Activated CD8-positive, alpha-beta memory T cell treated with anti-CD3 and anti-CD28 coated beads, Interleukin-2, amount 10 ng/mL, durations not matched to agents 7 days and 5 days (primary cell): ENCODE measurements at regions of chr20 and their contacts with region 1.

Region 1: DNA sequence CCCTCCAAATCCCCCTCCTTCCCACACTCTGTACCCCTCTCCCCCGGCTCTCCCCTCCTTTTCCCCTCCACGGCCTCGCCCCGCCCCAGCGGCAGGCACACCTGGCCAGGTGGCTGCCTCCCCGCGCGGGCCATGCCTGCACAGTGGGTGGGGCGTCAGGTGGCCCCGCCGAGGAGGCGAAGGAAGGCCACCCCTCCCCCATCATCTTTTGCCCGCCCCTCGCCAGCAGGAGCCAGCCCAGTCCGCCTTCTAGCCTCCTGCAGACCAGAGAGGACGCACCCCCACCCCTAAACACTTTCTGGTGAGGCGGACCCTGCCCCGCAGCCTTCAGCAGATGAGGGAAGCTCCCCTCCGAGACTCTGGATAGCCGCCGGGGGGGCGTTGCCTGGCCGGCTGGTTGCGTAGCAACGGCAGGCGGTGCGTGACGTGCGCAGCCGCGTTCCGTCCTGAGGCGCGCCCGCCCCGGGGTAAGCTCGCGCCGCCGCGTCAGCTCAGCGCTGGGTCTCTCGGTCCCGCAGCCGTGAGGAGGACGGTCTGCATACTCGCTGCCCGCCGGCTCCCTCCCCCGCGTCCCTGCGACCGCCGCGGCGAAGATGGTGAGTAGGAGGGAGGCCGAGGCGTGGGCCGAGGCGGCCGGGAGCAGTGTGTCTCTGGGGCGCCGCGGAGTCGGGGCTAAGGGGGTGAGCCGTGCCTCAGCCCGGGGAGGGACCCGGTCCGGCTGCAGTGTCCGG is at the start of gene DSTN:
- DNase-seq: peak; percentile 91
- ATAC-seq: peak; percentile 90
- H3K4me3 Mint-ChIP-seq: peak within 1 kb of the TSS; percentile 88
- H3K27ac Mint-ChIP-seq: peak within 1 kb of the TSS; percentile 89
- H3K4me1 Mint-ChIP-seq: peaks cover 29% of the 10 kb centered on the region
- H3K27me3 Mint-ChIP-seq: peaks cover 21% of the 10 kb centered on the region
- total RNA-seq, gene DSTN: 55.8 to 78.3 TPM

Region 2: GRCh38 chr20:17431621-17432364 is 138.0 kb before region 1 on chr20:
- CTCF ChIA-PET with region 1: no interaction called
- DNase-seq: peak; percentile 53
- ATAC-seq: peak; percentile 58
- H3K4me3 Mint-ChIP-seq: no peak overlapping the region
- H3K27ac Mint-ChIP-seq: no peak overlapping the region
- H3K4me1 Mint-ChIP-seq: no peaks in the 10 kb centered on the region
- H3K27me3 Mint-ChIP-seq: peaks cover 22% of the 10 kb centered on the region

Region 3: DNA sequence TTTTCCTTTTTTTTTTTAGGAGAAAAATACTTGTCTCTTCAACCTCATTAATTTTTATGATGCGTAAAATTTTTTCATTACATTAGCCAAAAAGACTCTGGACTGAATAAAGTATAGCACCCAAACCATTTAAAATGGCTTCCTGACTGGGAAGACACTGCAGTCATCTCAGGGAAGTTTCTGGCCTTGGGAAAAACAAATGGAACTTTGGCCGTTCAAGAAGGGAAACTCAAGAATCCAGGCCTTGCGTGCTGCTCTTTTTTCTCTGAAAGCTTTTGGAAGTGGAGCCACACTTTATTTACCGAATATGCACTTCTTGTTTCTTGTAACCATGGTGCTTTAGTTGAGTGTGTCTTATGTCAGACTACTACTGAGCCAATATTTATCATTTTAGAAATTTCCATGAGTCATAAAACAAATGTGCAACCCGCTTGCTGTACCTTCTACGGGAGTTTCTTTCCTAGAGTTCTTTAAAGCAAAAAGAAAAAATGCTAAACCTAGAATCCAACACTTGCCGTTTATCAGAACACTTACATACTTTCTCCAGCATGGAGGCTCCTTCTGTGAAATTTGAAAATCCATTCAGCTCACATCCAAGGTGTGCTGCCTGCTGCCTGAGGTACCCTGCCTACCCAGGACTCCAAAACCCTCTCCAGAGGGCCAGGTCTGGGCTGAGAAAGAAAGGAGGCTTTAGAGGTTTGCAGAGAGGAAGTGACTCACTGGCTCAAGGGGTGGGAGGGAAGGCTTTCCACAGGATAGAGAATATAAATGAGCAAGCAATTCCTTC is 11.4 kb before region 1 on chr20:
- CTCF ChIA-PET with region 1: interaction called, 13 read pairs
- DNase-seq: peak; percentile 42
- ATAC-seq: peak; percentile 83
- H3K4me3 Mint-ChIP-seq: no peak overlapping the region
- H3K27ac Mint-ChIP-seq: no peak overlapping the region
- H3K4me1 Mint-ChIP-seq: peaks cover 24% of the 10 kb centered on the region
- H3K27me3 Mint-ChIP-seq: peaks cover 3% of the 10 kb centered on the region

Region 4: DNA sequence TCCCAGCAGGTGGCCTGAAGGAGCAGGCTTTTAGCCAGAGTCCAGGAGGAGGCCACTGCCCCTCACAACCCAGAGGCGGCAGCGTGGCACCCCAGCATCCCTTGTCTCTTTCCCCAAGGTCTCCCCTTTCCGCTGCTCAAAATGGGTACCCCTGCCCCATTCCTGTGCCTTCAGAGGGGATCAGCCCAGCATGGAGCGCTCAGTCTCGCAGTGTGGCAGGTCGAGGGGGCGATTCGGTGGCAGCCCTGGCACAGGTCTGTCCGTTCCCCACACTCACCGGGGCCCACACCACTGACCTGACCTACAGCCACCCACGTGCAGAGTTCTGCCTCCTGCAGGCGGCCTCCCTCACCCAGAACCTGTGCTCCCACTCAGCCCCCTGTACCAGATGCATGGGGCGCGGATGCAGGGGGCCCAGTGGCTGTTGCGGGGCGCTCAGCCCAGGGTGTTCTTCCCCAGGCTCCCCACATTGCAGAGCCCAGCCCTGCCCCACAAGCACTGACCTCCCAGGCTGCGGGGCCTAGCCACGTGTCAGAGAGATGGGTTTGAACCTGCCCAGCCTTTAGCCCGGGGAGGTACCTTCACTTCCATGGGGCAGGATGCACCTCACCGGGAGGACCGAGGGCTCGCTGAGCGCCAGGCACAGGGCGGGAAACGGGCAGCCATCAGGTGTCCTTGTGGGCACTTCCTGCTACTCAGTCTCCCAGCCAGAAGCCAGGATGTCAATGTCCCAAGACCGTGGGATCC is 41.9 kb after region 1 on chr20:
- CTCF ChIA-PET with region 1: interaction called, 21 read pairs
- DNase-seq: peak; percentile 58
- ATAC-seq: no peak
- H3K4me3 Mint-ChIP-seq: peak overlapping the region; percentile 60
- H3K27ac Mint-ChIP-seq: peak overlapping the region; percentile 96
- H3K4me1 Mint-ChIP-seq: peaks cover 47% of the 10 kb centered on the region
- H3K27me3 Mint-ChIP-seq: no peaks in the 10 kb centered on the region

Region 5: GRCh38 chr20:17617551-17618223 is 47.9 kb after region 1 on chr20:
- CTCF ChIA-PET with region 1: interaction called, 16 read pairs
- DNase-seq: peak; percentile 69
- ATAC-seq: peak; percentile 54
- H3K4me3 Mint-ChIP-seq: no peak overlapping the region
- H3K27ac Mint-ChIP-seq: peak overlapping the region; percentile 28
- H3K4me1 Mint-ChIP-seq: peaks cover 10% of the 10 kb centered on the region
- H3K27me3 Mint-ChIP-seq: no peaks in the 10 kb centered on the region

Region 6: GRCh38 chr20:17628101-17628841 is 58.5 kb after region 1 on chr20:
- CTCF ChIA-PET with region 1: no interaction called
- DNase-seq: no peak
- ATAC-seq: no peak
- H3K4me3 Mint-ChIP-seq: no peak overlapping the region
- H3K27ac Mint-ChIP-seq: no peak overlapping the region
- H3K4me1 Mint-ChIP-seq: no peaks in the 10 kb centered on the region
- H3K27me3 Mint-ChIP-seq: no peaks in the 10 kb centered on the region

Region 7: DNA sequence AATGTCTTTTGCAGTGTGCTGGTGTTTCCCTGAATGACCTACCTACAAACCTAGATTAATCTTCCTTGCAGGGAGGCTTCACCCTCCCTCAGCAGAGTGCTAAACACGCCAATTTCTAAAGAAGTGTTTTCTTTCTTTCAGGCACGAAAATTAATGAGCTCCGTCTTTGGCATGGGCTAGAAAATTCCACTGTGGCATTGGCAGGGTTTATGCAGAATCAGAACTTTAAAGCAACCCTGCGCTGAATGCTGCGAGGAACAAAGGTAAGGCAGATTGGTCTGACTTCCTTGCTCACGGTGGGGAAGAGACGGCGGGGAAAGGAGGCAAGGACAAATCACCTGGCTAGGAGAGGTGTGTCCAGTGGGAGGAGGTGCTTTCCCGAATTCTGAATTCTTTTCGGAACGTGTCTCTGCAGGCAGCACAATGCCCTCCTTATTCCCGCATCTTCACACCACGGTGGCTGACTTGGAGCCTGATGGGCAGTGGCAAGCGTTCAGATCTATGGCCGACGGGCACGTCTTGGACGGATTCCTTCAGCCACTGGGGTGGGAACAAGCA is 123.7 kb after region 1 on chr20:
- CTCF ChIA-PET with region 1: no interaction called
- DNase-seq: no peak
- ATAC-seq: no peak
- H3K4me3 Mint-ChIP-seq: no peak overlapping the region
- H3K27ac Mint-ChIP-seq: no peak overlapping the region
- H3K4me1 Mint-ChIP-seq: no peaks in the 10 kb centered on the region
- H3K27me3 Mint-ChIP-seq: peaks cover 46% of the 10 kb centered on the region